ENCODE measurements at regions of chr22 and their contacts with region 1.

Region 1: GRCh38 chr22:17891481-17892167 is 117.4 kb upstream of the BID start:
- DNase-seq: no peak

Region 2: DNA sequence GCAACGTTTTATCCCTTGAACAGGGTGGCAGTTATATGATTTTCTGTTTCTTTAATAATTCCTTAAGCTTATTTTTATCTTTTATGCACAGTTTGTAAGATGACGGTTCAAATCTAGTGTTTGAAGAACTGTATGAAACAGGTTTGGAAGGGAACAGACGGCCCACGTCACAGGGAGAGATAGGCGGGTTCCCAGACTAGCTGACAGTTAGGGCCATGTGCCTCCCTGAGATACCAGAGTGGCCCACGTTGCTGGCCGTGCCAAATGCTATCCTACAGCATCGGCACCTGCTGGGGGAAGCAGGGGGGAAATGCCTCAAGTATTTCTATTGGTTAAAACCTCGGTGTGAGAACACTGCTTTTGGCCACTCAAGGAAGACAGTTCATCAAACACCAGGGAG is 67.2 kb before region 1 on chr22:
- intact Hi-C with region 1: no loop called
- DNase-seq: no peak

Region 3: DNA sequence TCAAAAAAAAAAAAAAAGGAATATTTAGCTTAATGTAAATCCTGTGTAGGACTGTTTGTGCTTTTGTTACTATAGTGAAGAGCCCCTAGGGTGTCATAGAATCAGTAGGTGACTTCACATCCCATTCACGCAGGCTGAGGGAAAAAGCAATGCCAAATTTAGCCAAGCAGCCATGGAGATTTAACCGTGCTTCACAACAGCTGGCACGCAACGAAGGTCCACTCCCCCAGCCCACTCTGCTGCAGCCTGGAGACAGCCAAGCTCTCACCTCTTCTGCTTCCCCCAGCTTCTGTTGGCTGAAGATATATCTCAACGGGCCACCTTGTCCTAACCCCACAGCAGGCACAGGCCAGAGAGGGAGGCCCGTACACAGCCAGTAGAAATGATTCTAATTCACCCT is 38.6 kb before region 1 on chr22:
- intact Hi-C with region 1: loop called (anchors 5 kb)
- DNase-seq: no peak

Region 4: GRCh38 chr22:18152519-18152918 is 260.9 kb after region 1 on chr22:
- intact Hi-C with region 1: no loop called
- DNase-seq: no peak